Caco-2 (cell line): ENCODE measurements at regions of chr17 and their contacts with region 1.

Region 1: DNA sequence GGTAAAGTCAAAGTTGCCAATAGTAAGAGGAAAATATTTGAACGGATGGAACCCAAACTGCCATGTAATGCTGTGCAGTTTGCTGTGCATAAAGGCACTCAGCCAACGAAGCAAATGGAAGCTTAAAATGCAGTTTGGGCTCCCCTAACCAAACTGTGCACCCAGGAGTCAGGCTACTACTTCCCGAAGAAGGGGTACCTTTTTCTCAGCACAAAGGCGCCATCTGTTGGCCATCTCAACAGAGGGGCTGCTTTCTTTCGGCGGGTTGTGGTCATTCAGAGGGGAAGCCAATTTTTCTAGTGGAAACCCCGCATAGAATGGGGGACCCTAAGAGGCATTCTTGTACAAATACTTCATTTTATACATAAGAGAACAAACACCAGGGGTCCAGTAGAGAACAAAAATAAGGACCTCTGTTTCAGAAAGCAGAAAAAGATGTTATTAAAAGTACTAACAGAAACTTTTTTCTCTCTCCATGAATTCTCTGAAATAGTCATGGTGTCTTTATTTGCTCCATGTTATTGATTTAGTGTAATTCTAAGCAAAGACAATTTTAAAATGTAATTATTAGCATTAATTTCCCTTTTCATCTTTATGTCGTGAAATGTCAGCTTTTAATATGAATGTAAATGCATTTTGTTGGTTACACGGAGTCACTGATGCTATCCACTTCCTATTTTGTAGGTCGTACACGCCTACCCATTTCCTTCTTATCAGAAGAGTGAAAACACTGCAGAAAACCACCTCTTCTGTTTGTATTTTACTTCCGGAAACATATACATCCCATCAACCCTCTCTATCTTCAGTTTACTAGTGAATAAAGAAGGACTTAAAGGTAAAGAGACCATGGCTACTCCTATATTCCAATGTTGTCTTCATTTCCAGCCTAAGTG is 453.3 kb downstream of the KCNJ2 start:
- DNase-seq: peak; percentile 50 to 56
- H3K4me3 ChIP-seq: no peak overlapping the region
- H3K4me3 Mint-ChIP-seq: no peak overlapping the region
- H3K27ac Mint-ChIP-seq: no peak overlapping the region
- H3K4me1 ChIP-seq: no peaks in the 10 kb centered on the region
- H3K4me1 Mint-ChIP-seq: no peaks in the 10 kb centered on the region
- H3K27me3 ChIP-seq: no peaks in the 10 kb centered on the region
- H3K27me3 Mint-ChIP-seq: peaks cover 16% of the 10 kb centered on the region
- CTCF ChIP-seq: peak; percentile 67 to 80

Region 2: GRCh38 chr17:69574257-69575197 is 1048.1 kb before region 1 on chr17:
- CTCF ChIA-PET with region 1: no interaction called
- POLR2A ChIA-PET with region 1: no interaction called
- intact Hi-C with region 1: loop called (anchors 1 kb)
- DNase-seq: no peak
- H3K4me3 ChIP-seq: no peak overlapping the region
- H3K4me3 Mint-ChIP-seq: no peak overlapping the region
- H3K27ac Mint-ChIP-seq: no peak overlapping the region
- H3K4me1 ChIP-seq: no peaks in the 10 kb centered on the region
- H3K4me1 Mint-ChIP-seq: no peaks in the 10 kb centered on the region
- H3K27me3 ChIP-seq: no peaks in the 10 kb centered on the region
- H3K27me3 Mint-ChIP-seq: peaks cover 8% of the 10 kb centered on the region
- CTCF ChIP-seq: no peak

Region 3: GRCh38 chr17:70434536-70435490 is 187.8 kb before region 1 on chr17:
- CTCF ChIA-PET with region 1: no interaction called
- POLR2A ChIA-PET with region 1: no interaction called
- intact Hi-C with region 1: no loop called
- DNase-seq: no peak
- H3K4me3 ChIP-seq: no peak overlapping the region
- H3K4me3 Mint-ChIP-seq: no peak overlapping the region
- H3K27ac Mint-ChIP-seq: no peak overlapping the region
- H3K4me1 ChIP-seq: no peaks in the 10 kb centered on the region
- H3K4me1 Mint-ChIP-seq: no peaks in the 10 kb centered on the region
- H3K27me3 ChIP-seq: no peaks in the 10 kb centered on the region; the same call in 1 of the 2 replicates
- H3K27me3 Mint-ChIP-seq: no peaks in the 10 kb centered on the region
- CTCF ChIP-seq: no peak

Region 4: GRCh38 chr17:70582777-70583176 is 39.8 kb before region 1 on chr17:
- CTCF ChIA-PET with region 1: no interaction called
- POLR2A ChIA-PET with region 1: no interaction called
- intact Hi-C with region 1: no loop called
- DNase-seq: no peak
- H3K4me3 ChIP-seq: no peak overlapping the region
- H3K4me3 Mint-ChIP-seq: no peak overlapping the region
- H3K27ac Mint-ChIP-seq: no peak overlapping the region
- H3K4me1 ChIP-seq: no peaks in the 10 kb centered on the region
- H3K4me1 Mint-ChIP-seq: no peaks in the 10 kb centered on the region
- H3K27me3 ChIP-seq: no peaks in the 10 kb centered on the region
- H3K27me3 Mint-ChIP-seq: peaks cover 2% of the 10 kb centered on the region
- CTCF ChIP-seq: no peak